HEK293T (cell line): ENCODE measurements at regions of chr1 and their contacts with region 1.

Region 1: DNA sequence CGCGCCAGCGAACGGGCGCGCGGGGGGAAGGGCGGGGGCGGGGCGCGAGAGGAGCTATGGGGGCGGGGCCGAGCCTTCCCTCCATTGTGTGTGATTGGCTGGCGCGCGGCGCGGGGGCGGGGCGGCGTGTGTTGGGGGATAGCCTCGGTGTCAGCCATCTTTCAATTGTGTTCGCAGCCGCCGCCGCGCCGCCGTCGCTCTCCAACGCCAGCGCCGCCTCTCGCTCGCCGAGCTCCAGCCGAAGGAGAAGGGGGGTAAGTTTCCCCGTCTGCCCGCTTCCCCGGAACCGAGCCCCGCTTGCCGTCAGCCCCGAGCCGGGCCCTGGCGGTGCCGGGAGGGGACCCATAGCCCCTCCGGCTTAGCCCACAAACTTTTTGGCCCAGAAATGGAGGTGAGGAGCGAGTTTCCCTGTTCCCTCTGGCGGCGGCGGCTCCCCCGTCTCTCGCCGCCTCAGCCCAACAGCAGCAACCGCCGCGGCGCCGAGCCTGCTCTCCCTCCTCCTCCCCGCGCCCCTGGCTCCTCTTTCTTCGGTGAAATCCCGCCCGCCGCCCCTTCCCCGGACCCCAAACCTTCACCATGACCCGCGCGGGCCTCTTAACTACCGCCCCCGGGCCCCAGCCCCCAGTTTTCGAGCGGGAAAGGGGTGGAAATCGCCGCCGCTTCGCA is at the start of gene H3-3A:
- DNase-seq: peak; percentile 63

Region 2: GRCh38 chr1:225987491-225988316 is 75.0 kb before region 1 on chr1:
- CTCF ChIA-PET with region 1: interaction called, 7 read pairs
- POLR2A ChIA-PET with region 1: interaction called, 10 read pairs
- DNase-seq: no peak

Region 3: DNA sequence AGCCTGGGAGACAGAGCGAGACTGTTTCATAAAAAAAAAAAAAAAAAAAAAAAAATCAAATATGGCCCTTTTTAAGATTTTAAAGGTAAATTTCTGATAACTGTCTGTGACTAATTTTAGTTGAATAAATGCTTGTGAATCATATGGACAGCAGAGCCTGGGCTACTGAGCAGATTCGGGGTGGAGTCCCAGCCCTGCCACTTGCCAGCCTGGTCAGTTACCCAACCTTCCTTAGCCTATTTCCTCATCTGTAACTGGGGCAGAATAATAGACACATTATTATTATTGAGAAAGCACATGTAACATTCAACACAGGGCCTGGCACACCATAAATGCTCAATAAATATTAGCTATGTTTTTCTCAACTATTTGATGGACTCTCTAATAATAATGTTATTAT is 11.3 kb before region 1 on chr1:
- CTCF ChIA-PET with region 1: interaction called, 6 read pairs
- POLR2A ChIA-PET with region 1: interaction called, 46 read pairs
- DNase-seq: no peak

Region 4: GRCh38 chr1:226083302-226084101 is 20.8 kb after region 1 on chr1:
- CTCF ChIA-PET with region 1: interaction called, 14 read pairs
- POLR2A ChIA-PET with region 1: interaction called, 28 read pairs
- DNase-seq: peak; percentile 98

Region 5: GRCh38 chr1:226109829-226110248 is 47.1 kb after region 1 on chr1:
- CTCF ChIA-PET with region 1: interaction called, 12 read pairs
- POLR2A ChIA-PET with region 1: interaction called, 20 read pairs
- DNase-seq: peak; percentile 98

Region 6: DNA sequence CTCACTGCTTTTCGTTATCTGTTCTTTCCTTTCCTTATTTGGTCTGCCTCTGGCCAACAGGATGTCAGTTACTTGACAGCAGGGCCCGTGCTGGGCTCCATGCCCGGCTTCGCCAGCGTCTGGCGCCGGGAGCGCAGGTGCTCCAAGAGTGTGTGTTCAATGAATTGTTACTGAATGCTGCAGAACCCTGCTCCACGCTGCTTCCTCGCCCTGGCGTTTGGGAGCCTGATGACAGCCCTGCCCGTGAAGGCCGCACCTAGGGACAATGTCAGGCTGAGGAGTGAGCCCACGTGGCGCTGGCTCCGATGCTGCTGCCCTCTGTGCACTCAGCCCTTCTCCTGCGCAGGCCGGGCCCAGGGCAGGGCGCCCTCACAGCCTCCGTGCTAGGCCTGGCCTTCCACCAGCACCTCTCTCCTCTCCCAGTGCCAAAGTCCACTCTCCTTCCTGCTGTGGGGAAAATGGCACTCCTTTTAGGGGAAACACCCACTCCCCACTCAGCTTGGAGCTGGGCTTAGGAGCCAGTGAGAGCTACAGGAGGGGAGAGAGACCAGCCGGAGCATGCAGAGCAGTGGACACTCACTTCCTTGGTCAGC is 72.5 kb after region 1 on chr1:
- CTCF ChIA-PET with region 1: interaction called, 12 read pairs
- POLR2A ChIA-PET with region 1: interaction called, 3 read pairs
- DNase-seq: no peak

Region 7: DNA sequence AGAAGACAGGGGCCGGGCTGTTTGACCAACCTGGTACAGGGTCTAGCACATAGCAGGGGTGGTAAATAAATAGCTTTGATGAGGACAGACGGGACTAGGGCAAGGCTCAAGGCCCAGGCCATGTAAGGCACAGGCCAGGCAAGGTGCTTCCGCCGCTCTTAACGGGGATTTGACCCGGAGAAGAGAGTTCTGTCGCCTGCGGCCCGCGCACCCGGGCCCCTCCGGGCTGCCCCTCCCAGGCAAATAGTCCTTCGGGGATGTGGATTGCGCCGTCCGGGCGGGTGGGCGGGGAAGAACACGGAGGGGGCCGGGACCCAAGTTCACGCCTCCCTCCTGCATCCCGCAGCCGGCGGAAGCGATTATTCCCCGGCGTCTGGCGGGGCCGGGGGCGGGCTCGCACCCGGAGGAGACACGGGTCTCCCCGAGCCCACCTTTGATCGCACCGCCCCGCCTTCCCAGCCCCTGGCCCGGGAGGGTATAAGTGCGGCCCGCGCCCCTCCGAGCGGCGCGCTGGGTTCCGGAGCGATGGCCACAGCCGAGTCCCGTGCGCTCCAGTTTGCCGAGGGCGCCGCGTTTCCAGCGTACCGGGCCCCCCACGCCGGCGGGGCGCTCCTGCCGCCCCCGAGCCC is 160.6 kb after region 1 on chr1 and contains the start of gene MIXL1:
- CTCF ChIA-PET with region 1: no interaction called
- POLR2A ChIA-PET with region 1: no interaction called
- DNase-seq: no peak